Pancreas (tissue), 10 donors: ENCODE measurements at regions of chr6 and their contacts with region 1.

Region 1: DNA sequence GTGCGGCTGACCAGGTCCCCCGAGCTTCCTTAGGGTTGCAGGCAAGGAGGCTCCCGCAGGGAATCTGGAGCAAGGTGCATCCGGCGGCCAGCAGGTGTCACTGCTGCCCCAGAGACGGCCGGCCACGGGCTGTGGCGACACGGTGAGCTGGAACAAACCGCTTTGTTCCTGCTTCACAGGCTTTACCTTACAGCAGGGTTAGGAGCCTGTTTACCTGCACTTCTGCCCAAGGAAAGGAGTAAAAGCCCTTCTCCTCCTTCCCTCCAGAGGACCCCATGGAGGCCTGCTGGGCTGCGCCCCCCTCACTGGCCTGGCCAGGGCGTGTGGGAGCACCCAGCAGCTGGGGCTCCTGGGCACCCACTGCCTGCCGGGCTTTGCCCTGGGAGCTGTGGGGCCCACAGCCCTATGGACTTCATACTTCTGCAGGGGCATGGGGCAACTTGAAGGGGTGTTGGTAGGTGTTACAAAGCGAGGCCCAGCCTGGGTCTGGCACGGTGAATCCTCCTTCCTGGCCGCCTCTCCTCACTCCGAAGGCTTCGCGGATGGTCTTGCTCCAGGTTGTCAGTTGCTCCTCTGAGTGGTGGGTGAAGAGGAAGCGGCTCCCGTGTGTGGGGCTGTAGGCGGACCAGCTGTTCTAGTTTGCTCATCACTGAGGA is 88.4 kb downstream of the CDC5L start:
- DNase-seq: peak; percentile 66 to 95 (median 86)
- ATAC-seq: peak; percentile 96 to 99 (median 98)
- H3K4me3 ChIP-seq: no peak overlapping the region
- H3K27ac ChIP-seq: no peak overlapping the region
- H3K4me1 ChIP-seq: no peaks in the 10 kb centered on the region
- H3K27me3 ChIP-seq: no peaks in the 10 kb centered on the region
- CTCF ChIP-seq: peak; percentile 89 to 94 (median 91)

Region 2: GRCh38 chr6:45922728-45923351 is 1446.9 kb after region 1 on chr6:
- intact Hi-C with region 1: loop called in 1 of 3 experiments (anchors 10 kb)
- DNase-seq: peak in 4 of 6 donors; percentile 13 to 51 (median 30)
- ATAC-seq: peak in 3 of 4 donors; percentile 84 to 94 (median 93)
- H3K4me3 ChIP-seq: no peak overlapping the region
- H3K27ac ChIP-seq: no peak overlapping the region
- H3K4me1 ChIP-seq: no peaks in the 10 kb centered on the region
- H3K27me3 ChIP-seq: peaks cover 0 to 4% (median 0%) of the 10 kb centered on the region in 4 donors
- CTCF ChIP-seq: peak in 3 of 4 donors; percentile 21 to 32 (median 27)